ENCODE measurements at regions of chr5 and their contacts with region 1.

Region 1: DNA sequence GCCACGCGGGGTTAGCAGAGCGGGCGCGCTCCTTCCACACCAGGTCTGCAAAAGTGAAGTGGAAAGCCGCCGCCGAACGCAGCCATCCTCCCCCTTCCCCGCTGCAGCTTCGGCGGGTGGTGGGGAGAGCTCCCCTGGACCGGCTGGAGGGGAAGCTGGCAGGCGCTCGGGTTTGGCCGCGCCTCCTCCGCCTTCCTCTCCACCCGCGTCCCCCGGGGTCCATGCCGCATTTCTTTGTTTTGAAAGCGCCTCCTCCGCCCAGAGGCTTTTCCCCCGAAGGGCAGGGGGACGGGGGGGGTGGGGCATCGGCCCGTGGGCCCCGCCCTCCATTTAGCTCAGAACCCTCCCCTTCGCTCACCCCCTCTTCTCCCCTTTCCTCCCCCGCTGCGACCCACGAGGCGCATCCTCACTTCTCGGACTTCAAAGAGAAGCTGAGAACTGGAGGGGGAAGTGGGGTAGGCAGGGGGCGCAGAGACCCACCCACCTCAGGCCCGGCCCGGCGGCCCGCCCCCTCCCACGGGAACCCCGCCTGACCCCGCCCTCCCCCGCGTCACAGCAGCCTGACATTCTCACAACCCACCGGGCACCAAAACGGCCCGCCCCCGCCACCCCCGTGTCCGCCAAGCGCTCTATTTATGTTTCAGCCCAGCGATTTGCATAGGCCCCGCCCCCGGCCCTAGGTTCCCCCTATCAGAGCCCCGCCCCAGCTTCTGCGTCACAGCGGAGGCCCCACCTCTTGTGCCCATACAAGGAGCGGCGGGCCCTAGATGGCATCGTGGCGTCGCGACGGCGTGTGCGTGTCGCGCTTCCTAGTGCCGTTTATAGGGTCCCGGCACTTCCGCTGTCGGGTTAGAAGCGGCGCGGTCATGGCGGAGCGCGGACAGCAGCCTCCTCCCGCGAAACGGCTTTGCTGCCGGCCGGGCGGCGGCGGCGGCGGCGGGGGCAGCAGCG is at the start of gene ZSWIM6:
- DNase-seq: peak; percentile 99 to 100
- ATAC-seq: peak; percentile 74
- total RNA-seq, gene ZSWIM6: 22.5 to 27.1 TPM

Region 2: DNA sequence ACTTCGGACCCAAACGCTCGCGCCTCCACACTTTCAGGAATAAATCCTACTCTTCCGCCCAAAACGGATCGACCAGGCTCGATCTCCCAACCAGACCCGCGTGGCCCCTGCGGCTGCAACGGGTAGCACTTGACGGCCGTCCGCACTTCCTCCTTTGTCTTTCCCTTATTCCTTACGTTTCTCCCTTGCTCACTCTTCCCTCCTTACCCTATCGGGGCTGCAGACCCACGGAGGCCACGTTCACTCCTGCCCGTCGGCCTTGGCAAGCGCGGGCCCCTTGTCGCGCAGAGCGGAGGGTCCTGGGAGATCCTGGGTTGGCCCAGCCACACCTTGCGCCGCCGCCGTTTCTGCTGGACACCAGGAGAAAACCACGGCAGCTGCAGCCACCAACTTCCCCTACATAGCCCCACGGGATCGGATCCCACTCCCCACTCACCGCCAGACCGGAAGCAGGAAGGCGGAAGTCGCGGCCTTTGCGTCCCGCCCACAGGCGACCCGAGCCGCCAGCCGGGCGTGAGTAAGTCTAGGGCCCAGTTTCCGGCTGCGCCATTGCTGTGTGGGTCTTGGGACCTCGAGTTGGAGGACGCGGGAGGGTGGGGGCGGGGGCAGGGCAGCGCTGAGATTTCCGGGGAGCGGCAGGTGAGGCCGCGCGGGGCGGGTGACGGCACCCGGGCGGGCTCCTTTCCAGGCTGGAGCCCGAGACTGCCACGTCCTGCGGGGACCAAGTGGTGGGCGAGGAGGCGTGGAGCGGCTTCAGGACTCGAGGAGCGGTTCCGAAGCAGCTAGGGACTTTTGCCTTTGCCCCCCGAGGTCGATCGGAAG is 169.5 kb before region 1 on chr5 and contains the start of gene SMIM15:
- intact Hi-C with region 1: loop called in 1 of 2 experiments (anchors 10 kb)
- DNase-seq: peak; percentile 93
- ATAC-seq: peak; percentile 95
- total RNA-seq, gene SMIM15: 110 to 115 TPM

Region 3: DNA sequence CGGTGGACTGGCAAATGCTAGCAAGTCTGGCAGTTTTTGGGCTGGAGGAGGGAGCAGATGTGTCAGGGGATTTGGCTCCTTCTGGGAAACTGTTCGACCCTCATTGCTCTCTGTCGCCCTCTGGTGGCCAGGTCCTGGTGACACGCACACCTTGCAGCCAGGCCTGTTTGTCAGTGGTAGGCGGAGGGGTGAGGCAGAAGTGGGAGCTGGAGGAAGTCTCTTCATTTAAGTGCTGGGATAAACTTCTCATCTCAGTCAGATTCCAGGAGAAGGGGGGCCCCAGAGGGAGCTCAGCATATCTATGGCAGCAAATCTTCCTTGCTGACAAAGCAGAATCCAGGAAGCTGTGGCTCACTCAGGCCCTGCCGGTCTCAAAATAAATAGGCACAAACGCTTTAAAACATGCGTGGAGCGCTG is 326.9 kb after region 1 on chr5:
- intact Hi-C with region 1: loop called in 1 of 2 experiments (anchors 10 kb)
- DNase-seq: peak; percentile 67 to 92
- ATAC-seq: peak; percentile 91

Measured in left colon (tissue), 2 donors.